Calu3 (cell line): ENCODE measurements at regions of chr2 and their contacts with region 1.

Region 1: DNA sequence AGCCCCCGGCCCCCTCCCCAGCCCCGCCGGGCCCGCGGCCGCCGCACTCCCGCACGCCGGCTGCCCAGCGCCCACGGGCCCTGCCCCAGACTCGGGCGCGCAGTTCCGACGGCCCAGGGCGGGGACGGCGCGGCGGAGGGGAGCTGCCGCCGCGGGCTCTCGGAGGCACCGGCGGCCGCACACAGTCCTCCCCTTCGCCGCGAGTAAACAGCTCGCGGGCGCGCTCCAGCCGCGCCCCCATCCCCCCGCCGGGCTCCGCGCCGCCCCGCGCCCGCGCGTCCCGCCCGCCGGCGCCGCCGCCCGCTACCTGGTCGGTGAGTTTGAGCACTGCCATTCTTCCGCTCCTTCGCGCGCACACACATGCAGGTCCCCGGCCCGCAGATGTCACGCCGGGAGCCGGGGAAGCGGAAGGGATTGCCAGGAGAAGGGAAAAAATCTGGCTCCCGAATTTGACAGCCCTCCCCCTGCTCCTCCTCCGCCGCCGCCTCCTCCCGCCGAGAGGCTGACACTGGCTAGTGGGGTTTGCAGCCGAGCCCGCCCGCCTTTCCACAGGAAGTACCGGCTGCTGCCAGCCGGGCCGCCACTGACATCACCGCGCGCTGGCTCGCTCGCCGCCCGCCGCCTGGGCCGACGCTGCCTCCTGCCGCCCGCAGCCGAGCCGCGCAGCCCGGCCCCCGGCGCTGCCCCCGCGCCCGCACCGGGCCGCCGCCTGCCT is at the start of gene ANKRD44:
- DNase-seq: peak; percentile 85
- H3K4me3 Mint-ChIP-seq: peak within 1 kb of the TSS; percentile 81
- H3K27ac Mint-ChIP-seq: peak within 1 kb of the TSS; percentile 61
- H3K4me1 Mint-ChIP-seq: peaks cover 15% of the 10 kb centered on the region
- H3K27me3 Mint-ChIP-seq: no peaks in the 10 kb centered on the region
- CTCF ChIP-seq: peak; percentile 20
- total RNA-seq, gene ANKRD44: 7.1 and 10.0 TPM in 2 replicates

Region 2: GRCh38 chr2:197168705-197169104 is 141.7 kb before region 1 on chr2:
- CTCF ChIA-PET with region 1: no interaction called
- intact Hi-C with region 1: no loop called
- DNase-seq: peak; percentile 74
- H3K4me3 Mint-ChIP-seq: no peak overlapping the region
- H3K27ac Mint-ChIP-seq: no peak overlapping the region
- H3K4me1 Mint-ChIP-seq: peaks cover 23% of the 10 kb centered on the region
- H3K27me3 Mint-ChIP-seq: no peaks in the 10 kb centered on the region
- CTCF ChIP-seq: peak; percentile 68

Region 3: GRCh38 chr2:197179744-197180498 is 130.5 kb before region 1 on chr2:
- CTCF ChIA-PET with region 1: no interaction called
- intact Hi-C with region 1: no loop called
- DNase-seq: no peak
- H3K4me3 Mint-ChIP-seq: no peak overlapping the region
- H3K27ac Mint-ChIP-seq: no peak overlapping the region
- H3K4me1 Mint-ChIP-seq: no peaks in the 10 kb centered on the region
- H3K27me3 Mint-ChIP-seq: no peaks in the 10 kb centered on the region
- CTCF ChIP-seq: no peak

Region 4: DNA sequence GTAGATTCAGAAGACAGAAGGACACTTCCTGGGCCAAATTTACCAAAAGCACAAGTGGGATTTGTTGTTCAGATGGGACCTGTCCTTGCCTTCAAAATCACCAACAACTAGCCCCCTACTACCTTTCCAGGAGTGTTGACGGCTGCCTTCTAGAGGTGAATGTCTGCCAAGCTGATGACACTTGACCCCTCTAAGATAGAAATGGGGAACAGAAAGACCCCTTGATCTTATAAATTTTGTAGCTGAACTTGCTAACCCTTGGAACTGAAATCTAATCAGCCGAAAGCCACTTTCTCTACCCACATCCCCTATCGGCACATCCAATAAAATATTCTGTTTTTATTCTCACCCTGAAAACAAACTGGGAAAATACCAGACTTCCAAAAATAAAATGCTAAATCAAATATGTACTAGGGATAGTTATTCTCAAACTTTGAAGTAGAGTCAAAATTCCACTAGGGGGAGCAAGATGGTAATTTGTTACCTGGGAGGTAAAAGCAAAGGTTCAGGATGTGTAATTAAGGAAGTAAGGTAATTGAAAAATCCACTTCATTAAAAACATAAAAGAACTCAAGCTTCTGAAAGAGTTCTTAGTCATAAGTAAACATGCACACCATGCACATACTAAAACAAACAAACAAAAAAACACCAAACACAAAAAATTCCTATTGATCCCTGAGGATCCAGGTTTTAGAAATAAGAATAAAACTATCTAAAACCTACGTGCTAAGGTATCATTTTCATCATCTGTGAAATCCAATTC is 119.1 kb before region 1 on chr2:
- CTCF ChIA-PET with region 1: interaction called, 7 read pairs
- intact Hi-C with region 1: loop called (anchors 2 kb)
- DNase-seq: peak; percentile 18
- H3K4me3 Mint-ChIP-seq: no peak overlapping the region
- H3K27ac Mint-ChIP-seq: no peak overlapping the region
- H3K4me1 Mint-ChIP-seq: peaks cover 1% of the 10 kb centered on the region
- H3K27me3 Mint-ChIP-seq: no peaks in the 10 kb centered on the region
- CTCF ChIP-seq: peak; percentile 58

Region 5: GRCh38 chr2:197209742-197210408 is 100.6 kb before region 1 on chr2:
- CTCF ChIA-PET with region 1: interaction called, 4 read pairs
- intact Hi-C with region 1: loop called (anchors 5 kb)
- DNase-seq: peak; percentile 62
- H3K4me3 Mint-ChIP-seq: peak overlapping the region; percentile 50
- H3K27ac Mint-ChIP-seq: peak overlapping the region; percentile 82
- H3K4me1 Mint-ChIP-seq: peaks cover 51% of the 10 kb centered on the region
- H3K27me3 Mint-ChIP-seq: no peaks in the 10 kb centered on the region
- CTCF ChIP-seq: no peak

Region 6: DNA sequence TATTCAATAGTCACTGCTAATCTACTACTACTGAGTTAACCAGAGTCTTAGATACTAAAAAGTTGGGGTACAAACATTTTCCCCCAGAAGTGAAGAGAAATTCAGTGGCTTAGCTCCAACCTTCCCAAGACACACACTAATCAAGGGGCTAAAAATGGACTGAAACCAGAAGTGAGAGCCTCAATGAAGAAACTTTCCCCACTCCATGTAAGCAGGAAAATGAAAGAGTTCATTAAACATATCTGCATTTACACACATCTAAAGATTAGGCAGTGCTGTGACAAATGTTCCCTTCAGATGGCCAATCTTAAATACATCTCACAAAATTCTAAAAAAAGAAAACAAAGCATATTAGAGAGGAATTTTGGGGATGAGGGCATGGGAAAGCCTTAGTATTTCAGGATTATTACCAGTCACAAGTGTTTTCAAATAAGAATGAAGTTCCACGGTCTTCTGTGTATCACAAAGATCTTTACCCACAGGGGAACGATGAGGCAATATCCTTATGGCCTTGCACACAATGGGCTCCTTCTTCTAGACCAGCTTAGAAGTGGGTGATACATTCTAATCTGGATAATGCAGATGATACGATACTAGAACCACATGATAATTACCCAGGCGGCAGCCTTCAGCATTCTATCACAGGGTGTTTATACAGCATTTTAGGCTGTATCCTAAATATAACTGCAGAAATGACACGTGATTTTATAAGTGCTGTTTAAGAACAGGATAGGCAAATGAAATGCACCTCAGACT is 17.0 kb before region 1 on chr2:
- CTCF ChIA-PET with region 1: no interaction called
- intact Hi-C with region 1: no loop called
- DNase-seq: no peak
- H3K4me3 Mint-ChIP-seq: no peak overlapping the region
- H3K27ac Mint-ChIP-seq: no peak overlapping the region
- H3K4me1 Mint-ChIP-seq: peaks cover 9% of the 10 kb centered on the region
- H3K27me3 Mint-ChIP-seq: no peaks in the 10 kb centered on the region
- CTCF ChIP-seq: no peak